ENCODE measurements at regions of chr5 and their contacts with region 1.

Region 1: GRCh38 chr5:54517174-54518092 is at the start of gene SNX18:
- DNase-seq: peak; percentile 86

Region 2: GRCh38 chr5:54146916-54147315 is 370.5 kb before region 1 on chr5:
- CTCF ChIA-PET with region 1: no interaction called
- POLR2A ChIA-PET with region 1: no interaction called
- DNase-seq: no peak

Region 3: GRCh38 chr5:54533541-54534190 is 16.2 kb after region 1 on chr5:
- CTCF ChIA-PET with region 1: no interaction called
- POLR2A ChIA-PET with region 1: no interaction called
- DNase-seq: no peak

Region 4: GRCh38 chr5:54844905-54845566 is 327.6 kb after region 1 on chr5:
- CTCF ChIA-PET with region 1: interaction called, 23 read pairs
- POLR2A ChIA-PET with region 1: interaction called, 4 read pairs
- DNase-seq: no peak

Region 5: GRCh38 chr5:54867310-54867944 is 350.0 kb after region 1 on chr5:
- CTCF ChIA-PET with region 1: interaction called, 16 read pairs
- POLR2A ChIA-PET with region 1: interaction called, 3 read pairs
- DNase-seq: peak; percentile 23